ENCODE measurements at regions of chr7 and their contacts with region 1.

Region 1: DNA sequence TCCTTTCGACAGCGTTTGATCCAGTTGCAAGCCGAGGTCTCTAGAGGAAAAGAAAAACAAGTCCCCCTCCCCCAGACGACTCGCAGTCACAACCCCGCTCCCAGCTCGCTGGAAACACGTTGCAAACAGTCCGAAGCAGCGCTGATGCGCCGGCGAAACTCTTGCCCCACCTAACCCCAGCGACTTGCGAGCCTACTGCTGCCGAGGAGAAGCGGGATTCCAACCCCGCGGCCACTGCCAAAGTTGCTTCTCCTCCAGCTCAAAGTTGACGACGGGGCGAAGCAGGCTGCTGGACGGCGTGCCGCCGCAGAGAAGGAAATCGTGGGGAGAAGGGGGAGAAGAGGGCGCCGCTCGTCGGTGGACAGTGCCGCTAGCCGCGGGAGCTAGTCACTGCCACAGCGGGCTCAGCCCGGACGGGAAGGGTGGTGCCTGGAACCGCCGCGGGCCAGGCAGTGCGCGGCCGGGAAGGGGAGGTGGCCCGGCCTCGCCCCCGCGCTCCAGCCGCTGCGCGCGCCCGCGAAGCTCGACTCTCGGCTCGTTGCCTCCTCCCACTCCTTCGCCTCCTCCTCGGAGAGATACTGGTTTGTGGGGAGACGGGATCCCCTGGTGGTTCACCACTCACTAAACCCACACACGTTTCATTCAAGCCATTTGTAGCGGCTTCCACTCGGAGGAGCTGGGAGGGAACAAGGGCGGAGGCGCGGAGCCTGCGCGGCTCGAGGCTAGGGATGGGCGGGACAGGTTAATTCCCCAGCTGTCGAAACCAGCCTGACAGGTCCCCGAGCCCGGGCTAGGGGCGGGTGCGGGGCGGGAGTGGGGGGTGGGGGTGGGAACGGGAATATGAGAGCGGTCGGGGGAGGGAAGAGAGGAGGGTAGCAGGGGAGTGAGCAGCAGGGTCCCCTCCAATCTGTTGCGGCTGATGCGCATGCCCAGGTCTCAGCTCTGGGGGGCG is at the start of gene GPR37:
- DNase-seq: peak; percentile 92
- H3K4me3 Mint-ChIP-seq: peak within 1 kb of the TSS; percentile 75
- H3K27ac Mint-ChIP-seq: peak within 1 kb of the TSS; percentile 73
- H3K4me1 Mint-ChIP-seq: peaks cover 12% of the 10 kb centered on the region
- H3K27me3 Mint-ChIP-seq: no peaks in the 10 kb centered on the region
- CTCF ChIP-seq: peak; percentile 63
- total RNA-seq, gene GPR37: 1.9 TPM in 2 replicates

Region 2: GRCh38 chr7:124152859-124153692 is 612.6 kb before region 1 on chr7:
- CTCF ChIA-PET with region 1: interaction called, 28 read pairs
- POLR2A ChIA-PET with region 1: interaction called, 4 read pairs
- intact Hi-C with region 1: loop called (anchors 1 kb)
- DNase-seq: peak; percentile 62
- H3K4me3 Mint-ChIP-seq: no peak overlapping the region
- H3K27ac Mint-ChIP-seq: peak overlapping the region; percentile 75
- H3K4me1 Mint-ChIP-seq: peaks cover 9% of the 10 kb centered on the region
- H3K27me3 Mint-ChIP-seq: no peaks in the 10 kb centered on the region
- CTCF ChIP-seq: peak; percentile 29

Region 3: DNA sequence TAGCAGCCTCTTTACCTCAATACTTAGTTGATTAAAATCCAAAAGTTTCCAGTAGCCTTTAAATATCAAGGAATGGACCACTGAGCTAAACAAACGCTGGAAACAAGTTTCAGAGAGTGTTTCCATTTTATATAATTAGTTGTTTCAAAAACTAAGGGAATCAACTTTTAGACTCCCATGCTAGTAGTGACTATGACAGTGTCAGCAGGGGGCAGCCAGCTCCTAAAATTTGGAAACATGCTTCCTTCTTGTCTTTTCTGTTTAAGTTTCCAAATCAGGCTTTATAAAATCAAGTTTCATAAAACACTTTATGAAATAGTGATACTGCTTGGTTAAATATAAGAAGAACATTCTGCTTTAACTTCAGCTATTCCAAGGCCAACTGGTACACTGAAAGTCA is 594.6 kb before region 1 on chr7:
- CTCF ChIA-PET with region 1: interaction called, 45 read pairs
- POLR2A ChIA-PET with region 1: interaction called, 13 read pairs
- intact Hi-C with region 1: loop called (anchors 1 kb)
- DNase-seq: peak; percentile 63
- H3K4me3 Mint-ChIP-seq: no peak overlapping the region
- H3K27ac Mint-ChIP-seq: no peak overlapping the region
- H3K4me1 Mint-ChIP-seq: no peaks in the 10 kb centered on the region
- H3K27me3 Mint-ChIP-seq: no peaks in the 10 kb centered on the region
- CTCF ChIP-seq: peak; percentile 66

Region 4: GRCh38 chr7:124701955-124702354 is 63.7 kb before region 1 on chr7:
- CTCF ChIA-PET with region 1: interaction called, 11 read pairs
- POLR2A ChIA-PET with region 1: interaction called, 22 read pairs
- intact Hi-C with region 1: no loop called
- DNase-seq: peak; percentile 84
- H3K4me3 Mint-ChIP-seq: peak overlapping the region; percentile 3
- H3K27ac Mint-ChIP-seq: peak overlapping the region; percentile 8
- H3K4me1 Mint-ChIP-seq: peaks cover 25% of the 10 kb centered on the region
- H3K27me3 Mint-ChIP-seq: no peaks in the 10 kb centered on the region
- CTCF ChIP-seq: no peak

Region 5: DNA sequence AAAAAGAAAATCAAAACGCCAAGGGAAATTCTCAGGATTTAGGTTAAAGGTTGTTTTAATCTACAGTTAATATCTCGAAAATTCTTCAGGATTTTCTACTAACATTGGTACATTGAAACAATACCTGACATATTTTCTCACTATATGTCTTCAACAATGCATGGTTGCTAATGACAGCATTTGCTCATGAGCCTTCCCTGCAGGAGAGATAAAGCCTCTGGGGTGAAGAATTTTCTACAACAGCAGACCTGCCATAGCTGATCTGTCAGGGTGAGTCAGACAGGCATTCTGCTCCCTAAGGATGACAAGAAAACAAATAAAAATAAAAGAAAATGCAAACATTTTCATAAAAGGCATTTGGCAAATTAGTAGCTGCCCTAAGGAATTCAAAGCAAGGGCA is 11.6 kb after region 1 on chr7:
- CTCF ChIA-PET with region 1: interaction called, 18 read pairs
- POLR2A ChIA-PET with region 1: interaction called, 4 read pairs
- intact Hi-C with region 1: no loop called
- DNase-seq: no peak
- H3K4me3 Mint-ChIP-seq: no peak overlapping the region
- H3K27ac Mint-ChIP-seq: no peak overlapping the region
- H3K4me1 Mint-ChIP-seq: no peaks in the 10 kb centered on the region
- H3K27me3 Mint-ChIP-seq: no peaks in the 10 kb centered on the region
- CTCF ChIP-seq: no peak

Region 6: GRCh38 chr7:124784879-124785818 is 19.5 kb after region 1 on chr7:
- CTCF ChIA-PET with region 1: interaction called, 18 read pairs
- POLR2A ChIA-PET with region 1: interaction called, 7 read pairs
- intact Hi-C with region 1: loop called (anchors 2 kb)
- DNase-seq: peak; percentile 64
- H3K4me3 Mint-ChIP-seq: no peak overlapping the region
- H3K27ac Mint-ChIP-seq: no peak overlapping the region
- H3K4me1 Mint-ChIP-seq: no peaks in the 10 kb centered on the region
- H3K27me3 Mint-ChIP-seq: no peaks in the 10 kb centered on the region
- CTCF ChIP-seq: peak; percentile 91

Region 7: GRCh38 chr7:125412890-125413665 is 647.4 kb after region 1 on chr7:
- CTCF ChIA-PET with region 1: no interaction called
- POLR2A ChIA-PET with region 1: no interaction called
- intact Hi-C with region 1: no loop called
- DNase-seq: no peak
- H3K4me3 Mint-ChIP-seq: no peak overlapping the region
- H3K27ac Mint-ChIP-seq: no peak overlapping the region
- H3K4me1 Mint-ChIP-seq: peaks cover 5% of the 10 kb centered on the region
- H3K27me3 Mint-ChIP-seq: no peaks in the 10 kb centered on the region
- CTCF ChIP-seq: no peak

Measured in MCF 10A (cell line).